Activated CD8-positive, alpha-beta T cell treated with anti-CD3 and anti-CD28 coated beads, Interleukin-2, amount 10 ng/mL, durations not matched to agents 7 days and 5 days (primary cell): ENCODE measurements at regions of chr16 and their contacts with region 1.

Region 1: DNA sequence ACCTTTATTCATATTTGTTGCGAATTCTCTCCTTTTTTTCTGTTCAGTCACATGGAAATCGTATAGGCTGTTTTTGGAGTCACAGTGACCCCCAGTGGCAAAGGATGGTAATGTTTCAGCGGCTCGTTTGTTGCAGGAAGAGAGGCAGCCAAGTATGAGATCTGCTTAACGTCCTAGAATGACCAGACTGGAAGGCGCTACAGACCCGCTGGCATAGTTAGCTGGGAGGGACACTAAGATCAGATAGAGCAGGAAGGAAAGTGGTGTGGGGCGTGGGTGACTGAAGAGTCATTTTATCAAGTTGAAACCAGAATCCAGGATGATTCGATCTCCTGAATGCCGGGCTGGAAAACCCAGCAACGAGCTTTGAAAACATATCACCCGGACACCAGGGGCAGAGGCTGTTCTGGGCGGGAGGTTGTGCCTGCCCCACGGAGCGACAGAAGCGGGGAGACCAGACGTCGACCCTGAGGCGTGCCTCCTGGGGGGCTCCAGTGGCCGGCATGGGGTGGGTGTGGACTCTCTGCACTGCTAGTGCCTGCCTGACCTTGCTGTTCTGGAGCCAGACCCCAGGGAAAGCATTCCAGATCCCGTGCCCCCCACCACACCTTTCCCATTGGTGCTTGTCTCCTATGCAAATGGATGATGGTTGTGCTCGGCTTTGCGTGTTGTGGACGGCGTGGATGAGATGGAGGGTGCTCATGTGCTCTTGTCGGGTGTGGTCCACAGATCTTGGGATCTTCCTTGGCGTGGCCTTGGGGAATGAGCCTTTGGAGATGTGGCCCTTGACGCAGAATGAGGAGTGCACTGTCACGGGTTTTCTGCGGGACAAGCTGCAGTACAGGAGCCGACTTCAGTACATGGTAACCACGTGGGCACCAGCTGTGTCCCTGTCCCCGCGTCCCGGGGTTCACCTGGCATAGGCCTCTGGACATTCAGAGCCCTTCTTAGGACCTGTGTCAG is 7.7 kb downstream of the IL34 start:
- DNase-seq: peak; percentile 88
- ATAC-seq: peak; percentile 65
- H3K4me3 Mint-ChIP-seq: peak overlapping the region; percentile 11
- H3K27ac Mint-ChIP-seq: peak overlapping the region; percentile 51
- H3K4me1 Mint-ChIP-seq: peaks cover 5% of the 10 kb centered on the region
- H3K27me3 Mint-ChIP-seq: peaks cover 2% of the 10 kb centered on the region

Region 2: GRCh38 chr16:70370924-70371323 is 283.2 kb before region 1 on chr16:
- CTCF ChIA-PET with region 1: interaction called, 26 read pairs
- POLR2A ChIA-PET with region 1: interaction called, 3 read pairs
- DNase-seq: no peak
- ATAC-seq: no peak
- H3K4me3 Mint-ChIP-seq: no peak overlapping the region
- H3K27ac Mint-ChIP-seq: peak overlapping the region; percentile 55
- H3K4me1 Mint-ChIP-seq: peaks cover 5% of the 10 kb centered on the region
- H3K27me3 Mint-ChIP-seq: no peaks in the 10 kb centered on the region

Region 3: GRCh38 chr16:70540994-70541393 is 113.1 kb before region 1 on chr16:
- CTCF ChIA-PET with region 1: no interaction called
- POLR2A ChIA-PET with region 1: no interaction called
- DNase-seq: no peak
- ATAC-seq: no peak
- H3K4me3 Mint-ChIP-seq: no peak overlapping the region
- H3K27ac Mint-ChIP-seq: no peak overlapping the region
- H3K4me1 Mint-ChIP-seq: peaks cover 2% of the 10 kb centered on the region
- H3K27me3 Mint-ChIP-seq: no peaks in the 10 kb centered on the region

Region 4: GRCh38 chr16:70665113-70665965 is 11.2 kb after region 1 on chr16:
- CTCF ChIA-PET with region 1: interaction called, 11 read pairs
- POLR2A ChIA-PET with region 1: no interaction called
- DNase-seq: no peak
- ATAC-seq: no peak
- H3K4me3 Mint-ChIP-seq: no peak overlapping the region
- H3K27ac Mint-ChIP-seq: no peak overlapping the region
- H3K4me1 Mint-ChIP-seq: peaks cover 5% of the 10 kb centered on the region
- H3K27me3 Mint-ChIP-seq: no peaks in the 10 kb centered on the region

Region 5: GRCh38 chr16:70681382-70682282 is 27.5 kb after region 1 on chr16:
- CTCF ChIA-PET with region 1: no interaction called
- POLR2A ChIA-PET with region 1: no interaction called
- DNase-seq: no peak
- ATAC-seq: no peak
- H3K4me3 Mint-ChIP-seq: no peak overlapping the region
- H3K27ac Mint-ChIP-seq: peak overlapping the region; percentile 55
- H3K4me1 Mint-ChIP-seq: peaks cover 23% of the 10 kb centered on the region
- H3K27me3 Mint-ChIP-seq: peaks cover 9% of the 10 kb centered on the region

Region 6: GRCh38 chr16:70737377-70738082 is 83.4 kb after region 1 on chr16:
- CTCF ChIA-PET with region 1: interaction called, 26 read pairs
- POLR2A ChIA-PET with region 1: no interaction called
- DNase-seq: peak; percentile 91
- ATAC-seq: peak; percentile 92
- H3K4me3 Mint-ChIP-seq: peak overlapping the region; percentile 70
- H3K27ac Mint-ChIP-seq: peak overlapping the region; percentile 99
- H3K4me1 Mint-ChIP-seq: peaks cover 74% of the 10 kb centered on the region
- H3K27me3 Mint-ChIP-seq: no peaks in the 10 kb centered on the region

Region 7: GRCh38 chr16:70789226-70789926 is 135.3 kb after region 1 on chr16:
- CTCF ChIA-PET with region 1: no interaction called
- POLR2A ChIA-PET with region 1: no interaction called
- DNase-seq: no peak
- ATAC-seq: no peak
- H3K4me3 Mint-ChIP-seq: no peak overlapping the region
- H3K27ac Mint-ChIP-seq: no peak overlapping the region
- H3K4me1 Mint-ChIP-seq: no peaks in the 10 kb centered on the region
- H3K27me3 Mint-ChIP-seq: no peaks in the 10 kb centered on the region